Mammary epithelial cell (primary cell): ENCODE measurements at regions of chr2 and their contacts with region 1.

Region 1: DNA sequence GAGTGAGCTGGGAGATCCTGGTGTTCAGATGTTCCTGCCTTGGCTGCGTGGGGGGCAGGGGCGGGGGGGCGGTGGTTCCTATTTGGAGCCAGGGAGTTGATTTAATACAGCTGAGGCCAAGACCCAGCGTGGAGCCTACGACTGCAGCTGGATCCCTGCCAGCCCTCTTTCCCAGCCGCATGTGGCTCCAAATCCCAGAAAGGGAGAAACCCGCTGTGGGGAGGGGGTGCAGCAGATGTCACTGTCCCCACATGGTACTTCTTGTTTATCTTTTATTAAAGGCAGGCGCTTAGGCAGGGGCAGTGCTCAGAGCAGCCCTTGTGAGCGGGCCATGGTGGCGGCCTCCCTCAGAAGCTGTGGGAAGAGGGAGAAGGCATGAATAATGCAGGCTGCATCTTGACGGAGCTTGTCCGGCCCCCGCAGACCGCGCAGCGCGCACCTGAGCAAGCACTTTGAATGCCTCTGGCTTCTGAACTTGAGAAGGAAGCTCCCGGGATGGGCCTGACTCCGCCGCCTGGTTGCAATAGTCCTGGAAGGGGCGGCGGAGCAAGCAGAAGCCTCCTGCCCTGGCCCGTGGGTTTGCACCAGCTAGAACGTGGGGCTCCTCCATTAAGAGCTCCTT is 112.1 kb downstream of the GLI2 start:
- DNase-seq: peak; percentile 82
- H3K4me3 ChIP-seq: no peak overlapping the region
- H3K27ac ChIP-seq: no peak overlapping the region
- H3K4me1 ChIP-seq: peaks cover 3% of the 10 kb centered on the region
- H3K27me3 ChIP-seq: no peaks in the 10 kb centered on the region
- CTCF ChIP-seq: no peak

Region 2: DNA sequence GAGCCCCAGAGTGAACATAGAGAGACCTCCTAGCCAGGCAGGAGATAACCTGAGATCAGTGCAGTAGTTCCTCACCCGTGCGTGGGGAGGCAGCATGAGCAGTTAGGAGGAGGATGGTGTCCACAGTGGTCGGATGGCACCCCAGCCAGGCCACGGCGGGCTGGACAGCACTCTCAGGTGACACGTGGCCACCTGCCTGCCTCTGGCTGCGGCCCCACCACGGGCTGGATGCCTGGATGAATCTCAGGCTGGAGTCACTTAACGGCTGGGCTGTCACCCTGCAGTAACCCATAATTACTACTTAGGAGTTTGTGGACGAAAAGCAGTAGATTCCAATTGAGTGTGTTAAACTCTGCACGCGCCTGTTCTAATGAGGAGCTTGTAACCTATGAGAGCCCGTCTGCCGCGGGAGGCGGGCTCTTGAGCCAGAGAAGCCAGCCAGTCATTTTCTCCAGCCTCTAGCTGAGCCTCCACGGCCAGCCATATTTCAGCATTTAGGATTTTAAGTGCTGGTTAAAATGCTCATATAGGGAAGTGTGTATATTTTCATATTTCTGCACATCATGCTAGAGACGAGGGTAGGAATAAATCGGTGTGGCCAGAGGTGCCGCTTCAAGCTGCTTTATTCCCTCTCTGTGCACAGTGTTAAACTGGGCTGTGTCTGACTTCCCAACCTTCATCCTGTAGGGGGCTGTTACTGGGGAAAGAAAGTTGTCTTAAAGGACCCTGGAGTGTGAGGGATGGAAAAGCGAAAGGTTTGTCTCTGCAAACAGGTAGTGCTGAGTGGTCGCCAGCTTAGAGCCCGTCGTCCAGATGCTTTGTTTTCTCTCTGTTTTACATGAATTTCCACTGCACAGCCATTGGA is 31.9 kb after region 1 on chr2:
- CTCF ChIA-PET with region 1: no interaction called
- dilution Hi-C with region 1: loop called (anchors 5 kb)
- in situ Hi-C with region 1: no loop called
- intact Hi-C with region 1: no loop called
- DNase-seq: no peak
- H3K4me3 ChIP-seq: no peak overlapping the region
- H3K27ac ChIP-seq: no peak overlapping the region
- H3K4me1 ChIP-seq: no peaks in the 10 kb centered on the region
- H3K27me3 ChIP-seq: peaks cover 2% of the 10 kb centered on the region
- CTCF ChIP-seq: no peak

Region 3: DNA sequence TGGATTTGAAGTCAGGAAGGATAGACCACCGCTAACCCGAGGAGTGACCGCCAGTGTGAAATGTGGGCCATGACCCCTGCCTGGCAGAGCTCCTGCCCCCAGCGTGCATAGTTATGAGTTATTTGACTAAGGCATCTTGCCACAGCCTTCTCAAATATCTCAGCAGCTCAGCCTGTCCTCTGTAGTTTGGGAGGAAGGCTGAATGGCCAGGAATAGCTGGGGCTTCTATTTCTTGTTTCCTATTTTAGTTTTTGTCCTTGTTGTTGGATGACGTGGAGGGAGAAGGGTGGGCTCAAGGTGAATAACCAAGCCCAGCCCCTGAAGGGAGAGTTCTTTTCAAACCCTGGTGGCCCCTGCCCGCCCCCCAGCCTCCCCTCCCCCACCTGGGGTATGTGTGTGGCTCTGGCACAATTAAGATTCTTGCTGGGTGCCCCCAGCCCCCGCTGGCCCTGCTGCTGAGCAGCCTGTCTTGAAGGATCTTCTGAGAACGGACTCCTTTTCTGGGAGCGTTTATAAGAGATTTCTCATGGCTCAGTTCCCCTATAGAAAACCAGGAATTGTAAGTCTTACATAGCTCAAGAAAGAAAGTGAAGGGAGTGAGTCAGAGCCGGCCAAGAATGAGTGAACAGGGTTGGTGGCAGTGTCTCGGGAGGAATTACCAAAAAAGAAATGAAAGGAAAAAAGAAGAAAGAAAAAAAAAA is 45.3 kb after region 1 on chr2:
- CTCF ChIA-PET with region 1: no interaction called
- dilution Hi-C with region 1: no loop called
- in situ Hi-C with region 1: no loop called
- intact Hi-C with region 1: no loop called
- DNase-seq: no peak
- H3K4me3 ChIP-seq: no peak overlapping the region
- H3K27ac ChIP-seq: no peak overlapping the region
- H3K4me1 ChIP-seq: no peaks in the 10 kb centered on the region
- H3K27me3 ChIP-seq: no peaks in the 10 kb centered on the region
- CTCF ChIP-seq: no peak

Region 4: GRCh38 chr2:120914839-120915521 is 67.2 kb after region 1 on chr2:
- CTCF ChIA-PET with region 1: no interaction called
- dilution Hi-C with region 1: no loop called
- in situ Hi-C with region 1: no loop called
- intact Hi-C with region 1: no loop called
- DNase-seq: peak; percentile 69
- H3K4me3 ChIP-seq: no peak overlapping the region
- H3K27ac ChIP-seq: no peak overlapping the region
- H3K4me1 ChIP-seq: peaks cover 17% of the 10 kb centered on the region
- H3K27me3 ChIP-seq: no peaks in the 10 kb centered on the region
- CTCF ChIP-seq: peak in 1 of 2 donors; percentile 2

Region 5: DNA sequence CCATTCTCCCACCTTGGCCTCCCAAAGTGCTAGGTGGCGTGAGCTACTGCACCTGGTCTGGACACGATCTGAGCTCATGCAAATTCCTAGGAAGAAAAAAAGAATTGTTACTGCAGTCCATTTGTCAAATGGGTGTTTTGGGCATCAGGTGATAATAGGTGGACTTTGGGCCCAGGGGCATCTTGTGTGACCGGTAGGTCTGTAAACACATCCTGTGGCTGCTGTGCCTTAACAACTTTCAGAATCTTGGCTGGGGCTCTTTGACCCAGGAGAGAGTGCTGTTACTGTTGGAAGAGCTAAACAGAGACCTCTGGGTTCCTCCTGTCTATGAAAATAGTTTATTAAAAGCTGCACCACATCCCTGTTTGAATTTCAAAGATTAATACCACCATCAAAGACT is 472.1 kb after region 1 on chr2:
- CTCF ChIA-PET with region 1: no interaction called
- dilution Hi-C with region 1: no loop called
- in situ Hi-C with region 1: no loop called
- intact Hi-C with region 1: no loop called
- DNase-seq: no peak
- H3K4me3 ChIP-seq: no peak overlapping the region
- H3K27ac ChIP-seq: no peak overlapping the region
- H3K4me1 ChIP-seq: no peaks in the 10 kb centered on the region
- H3K27me3 ChIP-seq: no peaks in the 10 kb centered on the region
- CTCF ChIP-seq: no peak